PC-3 (cell line): ENCODE measurements at regions of chr2 and their contacts with region 1.

Region 1: GRCh38 chr2:203484266-203485112 is 50.6 kb downstream of the RAPH1 start:
- DNase-seq: peak; percentile 72
- ATAC-seq: peak; percentile 98
- H3K4me3 ChIP-seq: no peak overlapping the region
- H3K27ac ChIP-seq: no peak overlapping the region
- H3K4me1 ChIP-seq: no peaks in the 10 kb centered on the region; the same call in 1 of the 2 replicates
- H3K27me3 ChIP-seq: no peaks in the 10 kb centered on the region
- CTCF ChIP-seq: peak; percentile 90

Region 2: DNA sequence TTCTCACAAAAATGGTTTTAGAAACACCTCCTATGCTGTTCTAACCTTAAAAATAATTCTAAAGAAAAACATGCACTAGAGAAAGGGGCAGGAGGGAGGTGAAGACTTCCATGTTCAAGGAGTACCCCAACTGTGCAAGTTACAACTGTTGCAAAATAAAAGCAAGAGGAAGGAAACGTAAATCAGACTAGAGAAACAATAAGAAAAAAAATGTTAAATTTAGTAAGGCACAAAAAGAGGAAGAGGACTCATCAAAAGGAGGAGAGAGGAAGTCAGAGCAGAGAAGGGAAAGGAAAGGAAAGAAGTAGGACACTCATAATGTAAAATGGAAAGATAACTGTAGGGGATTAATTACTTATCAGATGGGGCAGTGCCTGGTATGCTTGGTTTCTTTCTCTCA is 16.5 kb after region 1 on chr2:
- CTCF ChIA-PET with region 1: no interaction called
- POLR2A ChIA-PET with region 1: no interaction called
- intact Hi-C with region 1: no loop called
- DNase-seq: no peak
- ATAC-seq: no peak
- H3K4me3 ChIP-seq: no peak overlapping the region
- H3K27ac ChIP-seq: no peak overlapping the region
- H3K4me1 ChIP-seq: no peaks in the 10 kb centered on the region; the same call in 1 of the 2 replicates
- H3K27me3 ChIP-seq: no peaks in the 10 kb centered on the region
- CTCF ChIP-seq: no peak

Region 3: DNA sequence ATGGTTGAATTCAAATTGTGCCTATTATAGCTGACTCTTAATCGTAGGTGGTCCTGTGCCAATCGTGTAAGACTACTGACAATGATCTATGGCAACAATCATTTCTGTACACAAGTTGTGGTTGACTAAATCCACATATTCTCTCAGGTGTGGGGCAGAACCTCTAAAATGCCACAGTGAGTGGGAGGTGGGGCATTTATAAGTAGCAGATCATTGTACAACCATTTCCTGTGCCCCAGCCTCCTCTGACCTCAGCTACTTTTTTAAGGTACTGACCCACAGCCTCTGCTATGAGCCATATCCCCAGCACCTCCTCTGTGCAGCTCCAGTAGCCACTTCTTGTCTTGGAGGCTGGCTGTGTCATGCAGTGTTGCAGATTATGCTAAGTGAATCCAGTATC is 99.2 kb after region 1 on chr2:
- CTCF ChIA-PET with region 1: no interaction called
- POLR2A ChIA-PET with region 1: interaction called, 13 read pairs
- intact Hi-C with region 1: no loop called
- DNase-seq: peak; percentile 88
- ATAC-seq: peak; percentile 74
- H3K4me3 ChIP-seq: no peak overlapping the region
- H3K27ac ChIP-seq: peak overlapping the region; percentile 52
- H3K4me1 ChIP-seq: peaks cover 73% of the 10 kb centered on the region
- H3K27me3 ChIP-seq: no peaks in the 10 kb centered on the region
- CTCF ChIP-seq: no peak